AG04449 (cell line): ENCODE measurements at regions of chr2 and their contacts with region 1.

Region 1: GRCh38 chr2:182980115-182980514 is 58.1 kb downstream of the NCKAP1 start:
- DNase-seq: no peak
- H3K4me3 ChIP-seq: no peak overlapping the region
- CTCF ChIP-seq: no peak

Region 2: DNA sequence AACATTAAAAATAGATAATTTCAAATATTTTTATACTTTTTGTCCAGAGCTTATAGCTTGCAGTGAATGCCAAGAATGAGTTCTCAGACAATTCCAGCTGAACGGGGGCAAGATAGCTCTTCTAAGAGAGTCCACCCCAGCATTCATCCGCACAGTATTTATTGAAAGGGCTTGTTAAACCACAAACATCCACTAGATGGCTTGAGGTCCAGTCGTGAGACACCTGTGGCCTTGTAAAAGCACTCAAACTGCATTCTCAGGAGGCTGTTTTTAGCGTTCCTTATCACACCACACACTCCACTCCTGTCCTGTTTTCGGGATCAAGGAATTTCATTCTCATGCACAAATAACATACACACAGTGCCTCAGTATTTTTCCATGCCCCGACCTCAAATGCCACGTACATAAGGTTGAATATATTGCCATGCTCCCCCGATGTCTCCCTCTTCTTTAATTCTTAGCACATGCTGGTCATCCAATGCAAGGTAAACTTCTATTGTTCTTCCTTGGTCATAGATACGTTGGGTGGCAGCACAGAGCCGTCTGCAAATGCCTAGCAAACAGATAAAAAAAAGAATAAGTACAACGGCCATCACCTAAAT is 216.7 kb before region 1 on chr2:
- CTCF ChIA-PET with region 1: interaction called, 57 read pairs
- POLR2A ChIA-PET with region 1: no interaction called
- DNase-seq: no peak
- H3K4me3 ChIP-seq: no peak overlapping the region
- CTCF ChIP-seq: peak; percentile 47

Region 3: DNA sequence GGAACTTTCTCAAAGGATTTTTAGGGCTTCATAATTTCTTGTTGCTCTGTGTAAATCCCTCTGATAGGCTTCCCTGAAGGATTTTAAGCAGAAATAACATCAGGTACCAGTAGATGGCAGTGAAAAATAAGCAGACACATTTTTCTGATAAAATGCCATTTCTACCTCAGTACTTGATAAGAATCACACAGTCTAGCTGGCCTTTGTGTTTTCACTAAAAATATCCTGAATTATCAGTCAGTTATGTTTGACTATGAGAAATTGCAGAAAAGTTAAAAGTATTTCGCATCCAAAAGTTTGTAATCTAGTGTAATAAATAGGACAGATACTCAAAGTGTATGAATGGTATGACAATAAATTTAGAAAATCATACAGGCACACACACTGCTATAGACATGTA is 195.3 kb before region 1 on chr2:
- CTCF ChIA-PET with region 1: interaction called, 84 read pairs
- POLR2A ChIA-PET with region 1: no interaction called
- DNase-seq: no peak
- H3K4me3 ChIP-seq: no peak overlapping the region
- CTCF ChIP-seq: peak; percentile 34

Region 4: DNA sequence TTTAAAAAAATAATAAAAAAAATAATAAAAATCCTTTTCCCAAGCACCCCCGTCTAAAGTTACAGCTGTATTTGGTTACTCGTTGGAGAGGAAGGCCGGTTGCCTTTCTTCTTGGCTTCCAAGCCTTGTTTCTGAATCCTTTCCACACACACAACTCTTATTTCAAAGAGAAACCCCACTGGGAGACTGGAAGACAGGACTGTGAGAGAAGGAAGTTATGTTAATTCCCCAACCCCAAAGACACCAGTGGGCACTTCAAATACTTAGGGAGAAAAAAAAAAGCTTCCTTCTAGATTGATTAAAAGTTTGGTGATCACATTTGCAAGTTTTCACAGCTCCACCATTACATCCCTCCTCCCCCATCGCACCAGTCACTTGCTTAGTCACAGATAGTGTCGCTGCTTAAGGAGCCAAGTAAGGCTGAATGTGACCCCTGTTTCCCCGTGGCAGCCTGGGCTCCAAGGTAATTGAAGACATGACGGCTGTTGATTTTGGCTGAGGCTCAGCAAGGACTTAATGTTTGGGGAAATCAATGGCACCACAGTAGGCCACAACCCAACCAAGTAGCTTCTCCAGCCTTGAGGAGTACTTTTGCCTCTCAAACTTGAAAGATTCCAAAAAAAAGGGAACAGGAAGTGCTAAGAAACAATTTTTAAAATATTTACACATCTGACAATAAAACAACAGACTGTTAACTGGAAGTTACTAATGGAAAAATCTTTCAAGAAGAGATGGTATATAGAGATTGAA is 72.9 kb before region 1 on chr2:
- CTCF ChIA-PET with region 1: no interaction called
- POLR2A ChIA-PET with region 1: no interaction called
- DNase-seq: no peak
- H3K4me3 ChIP-seq: no peak overlapping the region
- CTCF ChIP-seq: no peak

Region 5: GRCh38 chr2:182994228-182994912 is 14.3 kb after region 1 on chr2:
- CTCF ChIA-PET with region 1: interaction called, 20 read pairs
- POLR2A ChIA-PET with region 1: no interaction called
- DNase-seq: no peak
- H3K4me3 ChIP-seq: no peak overlapping the region
- CTCF ChIP-seq: no peak

Region 6: GRCh38 chr2:183070942-183071844 is 91.1 kb after region 1 on chr2:
- CTCF ChIA-PET with region 1: no interaction called
- POLR2A ChIA-PET with region 1: no interaction called
- DNase-seq: no peak
- H3K4me3 ChIP-seq: no peak overlapping the region
- CTCF ChIP-seq: peak; percentile 72

Region 7: GRCh38 chr2:183105402-183106134 is 125.5 kb after region 1 on chr2:
- CTCF ChIA-PET with region 1: no interaction called
- POLR2A ChIA-PET with region 1: no interaction called
- DNase-seq: no peak
- H3K4me3 ChIP-seq: no peak overlapping the region
- CTCF ChIP-seq: no peak